HCT116 (cell line): ENCODE measurements at regions of chr14 and their contacts with region 1.

Region 1: DNA sequence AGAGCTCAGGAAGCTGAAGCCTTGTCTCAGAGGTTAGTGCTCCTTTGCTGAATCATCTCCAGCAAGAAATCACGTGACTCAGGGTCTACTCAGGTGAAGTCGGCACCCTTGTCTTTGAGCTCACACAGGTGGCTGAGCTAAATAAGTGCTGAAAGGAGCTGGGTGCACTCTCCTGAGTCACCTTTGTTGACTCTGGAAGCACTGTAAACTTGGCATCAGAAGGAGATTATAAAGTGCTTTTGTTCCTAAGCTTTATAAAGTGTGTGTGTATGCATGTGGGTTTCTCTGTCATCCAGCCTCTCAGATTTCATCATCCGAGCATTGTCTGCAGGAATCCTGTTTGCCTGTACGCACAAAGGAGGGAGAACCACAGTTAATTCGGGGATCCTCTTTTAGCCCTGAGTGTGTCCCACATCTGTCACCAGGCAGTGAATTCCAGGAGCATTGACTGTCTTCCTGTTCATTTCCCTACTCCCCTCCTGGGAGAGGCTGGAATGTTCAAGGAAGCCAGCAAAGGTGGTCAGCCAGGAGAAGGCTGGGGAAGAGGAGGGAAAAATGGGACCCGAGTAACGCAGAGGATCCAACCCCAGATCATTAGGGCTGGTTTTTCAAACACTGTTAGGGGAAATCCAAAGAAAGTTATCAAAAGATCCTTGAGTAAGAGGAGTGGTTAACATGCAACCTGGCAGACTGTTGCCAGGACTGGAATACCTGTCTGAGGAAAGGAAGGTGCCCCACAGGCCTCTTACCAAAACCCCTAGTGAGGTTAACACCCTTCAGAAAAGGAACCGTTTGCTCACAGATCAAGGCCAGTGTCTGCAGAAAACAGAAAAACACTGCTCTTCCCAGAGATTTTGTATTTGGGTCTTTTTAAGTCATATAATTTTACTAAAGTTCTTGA is 157.5 kb upstream of the HIF1A start:
- DNase-seq: peak; percentile 95
- ATAC-seq: peak; percentile 86
- H3K4me3 ChIP-seq: peak overlapping the region in 1 of 2 experiments; percentile 12; a peak in 3 of 4 replicates
- H3K27ac ChIP-seq: peak overlapping the region; percentile 90
- H3K4me1 ChIP-seq: peaks cover 61 to 65% of the 10 kb centered on the region in 2 experiments
- H3K27me3 ChIP-seq: no peaks in the 10 kb centered on the region
- CTCF ChIP-seq: no peak
- POLR2A ChIP-seq: no peak
- RAD21 ChIP-seq: peak; percentile 45

Region 2: DNA sequence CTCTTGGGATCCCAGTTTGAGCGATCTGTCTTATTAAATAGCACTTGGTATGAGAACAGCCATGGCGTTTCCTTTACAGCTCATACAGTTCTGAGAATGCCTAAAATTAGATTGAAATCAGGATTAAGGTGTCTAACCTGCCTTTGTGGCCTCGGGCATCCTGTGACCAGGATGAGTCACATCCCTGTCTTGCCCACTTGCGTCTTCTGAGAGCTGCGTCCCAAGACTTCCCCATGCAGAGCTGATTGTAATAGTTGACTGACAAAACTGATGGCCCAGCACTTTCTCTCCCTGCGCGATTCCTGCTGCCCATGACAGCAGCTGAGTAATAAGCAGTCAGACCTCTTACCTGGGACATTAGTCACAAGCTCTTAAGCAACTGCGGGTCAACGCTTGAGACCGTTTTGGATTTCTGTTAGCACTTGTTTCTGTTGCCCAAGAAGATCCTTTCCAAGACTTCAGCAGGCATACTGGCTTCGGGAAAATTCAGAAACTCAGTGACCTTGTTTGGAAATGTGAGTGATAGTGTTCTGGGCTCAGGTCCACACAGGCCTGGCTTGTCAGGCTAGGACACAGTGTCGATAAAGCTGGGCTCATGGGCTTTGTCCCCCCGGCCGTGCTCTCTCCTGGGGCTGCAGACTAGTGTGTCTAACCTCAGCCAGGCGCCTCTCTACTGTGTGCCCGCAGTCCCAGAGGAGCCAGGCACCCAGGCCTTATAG is 12.4 kb before region 1 on chr14:
- CTCF ChIA-PET with region 1: no interaction called
- POLR2A ChIA-PET with region 1: interaction called, 45 read pairs
- RAD21 ChIA-PET with region 1: interaction called in 1 of 2 experiments, 5 read pairs
- intact Hi-C with region 1: no loop called
- DNase-seq: peak; percentile 97
- ATAC-seq: peak; percentile 85
- H3K4me3 ChIP-seq: peak overlapping the region in 1 of 2 experiments; percentile 15; a peak in 2 of 4 replicates
- H3K27ac ChIP-seq: peak overlapping the region; percentile 92
- H3K4me1 ChIP-seq: peaks cover 63 to 66% of the 10 kb centered on the region in 2 experiments
- H3K27me3 ChIP-seq: no peaks in the 10 kb centered on the region
- CTCF ChIP-seq: no peak
- POLR2A ChIP-seq: no peak
- RAD21 ChIP-seq: peak; percentile 13; the same call in 1 of the 2 replicates